ENCODE measurements at regions of chr2 and their contacts with region 1.

Region 1: GRCh38 chr2:17122887-17123501 is 395.2 kb downstream of the RAD51AP2 start:
- DNase-seq: no peak
- ATAC-seq: peak; percentile 39
- H3K4me3 ChIP-seq: no peak overlapping the region
- H3K4me3 Mint-ChIP-seq: no peak overlapping the region
- H3K27ac ChIP-seq: no peak overlapping the region
- H3K27ac Mint-ChIP-seq: peak overlapping the region; percentile 57
- H3K4me1 ChIP-seq: peaks cover 32 to 38% of the 10 kb centered on the region in 2 donors
- H3K4me1 Mint-ChIP-seq: peaks cover 6% of the 10 kb centered on the region
- H3K27me3 ChIP-seq: no peaks in the 10 kb centered on the region
- H3K27me3 Mint-ChIP-seq: no peaks in the 10 kb centered on the region
- CTCF ChIP-seq: no peak

Region 2: GRCh38 chr2:17068021-17068420 is 55.0 kb before region 1 on chr2:
- CTCF ChIA-PET with region 1: no interaction called
- POLR2A ChIA-PET with region 1: no interaction called
- intact Hi-C with region 1: loop called (anchors 10 kb)
- DNase-seq: no peak
- ATAC-seq: no peak
- H3K4me3 ChIP-seq: no peak overlapping the region
- H3K4me3 Mint-ChIP-seq: no peak overlapping the region
- H3K27ac ChIP-seq: no peak overlapping the region
- H3K27ac Mint-ChIP-seq: no peak overlapping the region
- H3K4me1 ChIP-seq: no peaks in the 10 kb centered on the region
- H3K4me1 Mint-ChIP-seq: no peaks in the 10 kb centered on the region
- H3K27me3 ChIP-seq: no peaks in the 10 kb centered on the region
- H3K27me3 Mint-ChIP-seq: no peaks in the 10 kb centered on the region
- CTCF ChIP-seq: no peak

Region 3: DNA sequence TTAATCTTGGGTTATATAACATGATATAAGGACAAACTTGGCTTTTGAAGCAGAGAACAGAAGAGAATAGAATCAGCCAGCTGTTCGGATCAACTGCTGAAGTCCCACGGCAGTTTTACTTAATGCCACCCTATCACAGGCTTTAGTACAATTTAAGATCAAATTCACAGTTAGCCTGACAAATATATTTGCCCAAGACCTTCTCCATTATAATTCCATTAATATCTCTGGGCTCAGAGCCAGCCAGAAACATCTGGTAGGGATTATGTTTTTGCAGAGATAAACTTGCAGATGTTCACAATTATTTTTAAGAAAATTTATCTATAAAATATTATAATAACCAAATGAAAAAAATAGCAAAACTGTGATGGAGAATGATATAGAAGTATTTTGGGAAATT is 13.9 kb after region 1 on chr2:
- CTCF ChIA-PET with region 1: no interaction called
- POLR2A ChIA-PET with region 1: no interaction called
- intact Hi-C with region 1: loop called (anchors 2 kb)
- DNase-seq: no peak
- ATAC-seq: no peak
- H3K4me3 ChIP-seq: no peak overlapping the region
- H3K4me3 Mint-ChIP-seq: no peak overlapping the region
- H3K27ac ChIP-seq: no peak overlapping the region
- H3K27ac Mint-ChIP-seq: no peak overlapping the region
- H3K4me1 ChIP-seq: no peaks in the 10 kb centered on the region
- H3K4me1 Mint-ChIP-seq: no peaks in the 10 kb centered on the region
- H3K27me3 ChIP-seq: no peaks in the 10 kb centered on the region
- H3K27me3 Mint-ChIP-seq: peaks cover 19% of the 10 kb centered on the region
- CTCF ChIP-seq: no peak

Measured in B cell (primary cell).